Posterior vena cava (tissue), 2 donors: ENCODE measurements at regions of chr7 and their contacts with region 1.

Region 1: DNA sequence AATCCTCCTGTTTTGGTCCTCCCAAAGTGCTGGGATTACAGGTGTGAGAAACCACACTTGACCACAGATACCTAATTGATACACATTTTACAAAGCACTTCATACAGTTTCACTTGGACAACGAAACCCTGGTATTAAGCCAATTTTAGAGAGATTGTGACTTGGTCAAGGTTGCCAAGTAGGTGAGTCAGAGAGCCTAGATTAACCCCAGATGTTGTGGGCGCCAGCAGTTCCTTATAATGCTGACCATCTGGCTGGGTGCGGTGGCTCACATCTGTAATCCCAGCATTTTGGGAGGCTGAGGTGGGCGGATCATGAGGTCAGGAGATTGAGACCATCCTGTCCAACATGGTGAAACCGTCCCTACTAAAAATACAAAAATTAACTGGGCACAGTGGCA is 4.9 kb upstream of the PHKG1 start:
- DNase-seq: peak; percentile 64

Region 2: DNA sequence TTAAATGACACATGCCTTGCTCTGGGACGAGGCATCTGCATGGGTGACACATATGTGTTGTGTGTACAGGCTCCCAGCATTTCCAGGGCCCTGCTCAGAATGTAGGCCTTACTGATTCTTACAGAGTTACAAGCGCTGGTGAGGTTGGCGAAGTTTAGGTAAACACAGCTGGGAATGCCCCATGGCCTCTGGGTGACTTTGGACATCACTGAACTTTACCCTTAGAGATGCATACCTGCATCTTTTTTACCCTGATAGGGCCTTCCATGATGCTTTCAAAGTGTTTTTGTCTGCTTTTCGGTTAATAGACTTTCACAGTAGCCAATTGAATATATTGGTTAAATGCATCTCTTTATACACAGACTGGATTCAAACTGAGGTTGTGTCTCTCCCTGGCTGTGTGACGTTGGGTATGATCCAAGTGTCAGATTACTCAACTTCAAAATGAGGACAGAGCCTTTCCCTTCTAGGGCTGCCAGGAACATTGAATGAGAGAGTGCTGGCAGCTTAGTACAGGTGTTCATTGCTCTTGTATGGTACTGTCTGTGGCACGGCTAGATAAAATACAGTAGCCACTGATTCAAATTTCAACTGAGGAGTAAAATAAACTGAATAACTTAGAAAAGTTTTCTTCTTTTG is 1049.4 kb before region 1 on chr7:
- intact Hi-C with region 1: loop called in 1 of 2 experiments (anchors 5 kb)
- DNase-seq: no peak